ENCODE measurements at regions of chr10 and their contacts with region 1.

Region 1: DNA sequence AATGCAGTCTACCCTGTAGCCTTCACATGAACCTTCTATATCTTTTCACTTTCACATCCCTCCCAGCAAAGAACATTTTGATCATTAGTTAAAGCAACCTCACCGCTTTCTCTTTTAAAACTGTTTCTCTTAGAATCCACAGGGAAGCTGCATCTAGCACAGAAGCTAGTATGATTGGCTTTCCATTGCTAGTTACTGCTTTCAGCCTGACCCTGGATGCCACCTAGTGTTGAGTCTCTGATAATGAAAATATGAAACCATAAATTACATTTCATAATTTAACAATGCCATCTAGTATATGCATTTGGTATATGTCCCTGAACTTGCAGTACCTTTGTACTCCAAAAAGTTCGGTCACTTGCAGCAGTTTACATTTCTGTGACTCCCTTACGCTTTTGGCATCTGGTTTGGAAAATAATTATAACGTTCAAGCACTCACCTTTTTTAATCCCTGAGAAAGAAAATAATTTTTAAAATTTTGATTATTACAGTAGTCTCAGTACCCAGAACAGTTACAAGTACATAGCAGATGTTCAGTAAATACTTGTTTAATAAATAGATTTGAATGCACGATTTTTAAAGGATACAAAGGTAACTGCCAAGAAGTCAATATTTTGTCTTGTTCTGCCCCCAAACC is 22.7 kb downstream of the CISD1 start:
- DNase-seq: peak in 7 of 9 donors; percentile 23 to 59 (median 44)
- ATAC-seq: peak; percentile 86
- H3K4me3 ChIP-seq: no peak overlapping the region
- H3K4me3 Mint-ChIP-seq: no peak overlapping the region
- H3K27ac ChIP-seq: no peak overlapping the region
- H3K27ac Mint-ChIP-seq: peak overlapping the region in 2 of 9 donors; percentile 60 to 76
- H3K4me1 ChIP-seq: no peaks in the 10 kb centered on the region
- H3K4me1 Mint-ChIP-seq: peaks cover 0 to 5% (median 3%) of the 10 kb centered on the region in 7 donors
- H3K27me3 ChIP-seq: no peaks in the 10 kb centered on the region
- H3K27me3 Mint-ChIP-seq: no peaks in the 10 kb centered on the region

Region 2: DNA sequence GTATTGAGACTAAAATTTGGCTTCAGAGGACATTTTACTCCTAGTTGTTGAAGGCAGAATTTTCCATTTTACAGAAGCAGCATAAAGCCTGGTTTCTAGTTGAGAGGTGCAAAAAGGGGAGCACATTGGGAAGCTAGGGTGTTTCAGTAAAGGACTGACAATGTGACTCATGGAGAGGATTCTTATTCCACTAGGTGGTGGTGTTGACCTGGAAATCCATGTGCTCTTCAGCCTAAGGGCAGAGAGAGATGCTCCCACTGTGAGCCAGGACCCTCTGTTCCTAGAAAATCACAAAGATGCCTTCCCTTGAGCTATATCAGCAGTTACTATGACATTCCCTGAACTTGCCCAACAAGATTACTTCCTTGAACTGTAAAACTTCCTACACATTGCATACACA is 711.7 kb before region 1 on chr10:
- CTCF ChIA-PET with region 1: no interaction called
- POLR2A ChIA-PET with region 1: no interaction called
- intact Hi-C with region 1: loop called in 1 of 2 experiments (anchors 5 kb)
- DNase-seq: no peak
- ATAC-seq: no peak
- H3K4me3 ChIP-seq: no peak overlapping the region
- H3K4me3 Mint-ChIP-seq: no peak overlapping the region
- H3K27ac ChIP-seq: no peak overlapping the region
- H3K27ac Mint-ChIP-seq: no peak overlapping the region
- H3K4me1 ChIP-seq: no peaks in the 10 kb centered on the region
- H3K4me1 Mint-ChIP-seq: no peaks in the 10 kb centered on the region
- H3K27me3 ChIP-seq: no peaks in the 10 kb centered on the region
- H3K27me3 Mint-ChIP-seq: no peaks in the 10 kb centered on the region

Region 3: DNA sequence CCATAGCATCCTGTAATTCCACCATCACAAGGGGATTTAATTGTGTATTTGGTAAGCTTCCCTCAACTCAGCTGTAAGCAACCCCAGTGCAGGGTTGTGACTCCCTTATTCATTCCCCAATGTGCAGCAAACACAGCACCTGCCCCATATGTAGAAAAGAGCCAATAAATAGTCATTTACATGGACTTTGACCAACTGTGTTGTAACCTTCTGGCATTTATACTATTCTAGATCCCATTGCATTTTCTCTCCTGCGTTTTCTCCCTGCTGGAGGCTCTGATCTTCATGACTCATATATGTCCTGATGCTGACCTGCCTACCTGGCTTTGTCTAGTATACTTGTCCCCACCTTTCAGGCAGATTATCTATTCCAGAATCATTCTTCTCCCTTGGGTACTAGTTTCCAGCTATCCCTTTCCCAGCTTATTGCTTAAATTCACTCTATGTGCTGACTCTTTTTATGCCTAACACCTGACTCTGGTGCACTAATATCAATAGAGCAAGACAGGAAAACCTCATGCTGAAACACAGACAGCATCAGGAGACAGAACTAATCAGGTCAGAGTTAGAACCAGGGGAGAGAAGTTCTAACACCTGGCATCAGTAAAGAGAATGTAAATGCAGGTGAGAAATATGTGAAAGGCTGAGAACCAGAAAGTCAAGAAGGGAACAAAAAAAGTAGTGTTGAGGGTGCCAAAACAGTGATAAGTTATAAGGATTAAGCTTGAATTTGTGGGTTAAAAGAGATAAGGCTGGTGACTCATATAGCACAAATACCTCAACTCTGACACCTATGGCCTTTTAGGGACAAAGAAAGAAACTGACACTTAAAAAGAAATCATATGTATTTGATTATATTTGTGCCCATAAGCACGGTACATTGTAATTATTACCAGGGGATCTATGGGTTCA is 426.6 kb before region 1 on chr10:
- CTCF ChIA-PET with region 1: no interaction called
- POLR2A ChIA-PET with region 1: no interaction called
- intact Hi-C with region 1: no loop called
- DNase-seq: no peak
- ATAC-seq: no peak
- H3K4me3 ChIP-seq: no peak overlapping the region
- H3K4me3 Mint-ChIP-seq: no peak overlapping the region
- H3K27ac ChIP-seq: no peak overlapping the region
- H3K27ac Mint-ChIP-seq: no peak overlapping the region
- H3K4me1 ChIP-seq: no peaks in the 10 kb centered on the region
- H3K4me1 Mint-ChIP-seq: no peaks in the 10 kb centered on the region
- H3K27me3 ChIP-seq: no peaks in the 10 kb centered on the region
- H3K27me3 Mint-ChIP-seq: no peaks in the 10 kb centered on the region

Region 4: DNA sequence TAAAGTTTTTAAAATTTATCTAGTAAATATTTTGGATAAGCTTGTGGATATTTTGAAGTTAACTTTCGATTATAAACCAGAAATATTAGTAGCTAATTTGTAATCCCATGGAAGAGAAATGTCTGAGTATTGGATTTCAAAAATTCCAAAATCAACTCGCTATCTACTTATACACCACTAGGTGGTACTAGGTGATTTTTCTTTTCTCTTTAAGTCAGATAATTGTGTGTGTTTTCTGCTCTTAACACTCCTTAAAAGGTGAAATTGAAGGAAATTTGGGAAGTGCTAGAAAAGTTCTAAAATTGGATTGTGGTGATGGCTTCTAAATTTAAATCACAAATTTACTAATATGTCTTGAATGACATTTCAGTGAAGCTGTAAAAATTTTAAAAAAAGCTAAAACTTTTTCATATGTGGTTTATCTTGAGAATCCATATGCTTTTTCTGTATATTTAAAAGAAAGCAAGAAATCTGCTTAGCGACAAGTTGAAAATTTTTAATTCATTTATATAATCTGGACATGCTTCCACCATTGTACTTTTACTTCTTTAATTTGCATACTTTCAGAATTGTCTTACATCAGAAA is 114.2 kb before region 1 on chr10:
- CTCF ChIA-PET with region 1: interaction called, 118 read pairs
- POLR2A ChIA-PET with region 1: no interaction called
- intact Hi-C with region 1: loop called (anchors 1 kb)
- DNase-seq: peak in 3 of 9 donors; percentile 12 to 29 (median 25)
- ATAC-seq: no peak
- H3K4me3 ChIP-seq: no peak overlapping the region
- H3K4me3 Mint-ChIP-seq: no peak overlapping the region
- H3K27ac ChIP-seq: no peak overlapping the region
- H3K27ac Mint-ChIP-seq: no peak overlapping the region
- H3K4me1 ChIP-seq: no peaks in the 10 kb centered on the region
- H3K4me1 Mint-ChIP-seq: no peaks in the 10 kb centered on the region
- H3K27me3 ChIP-seq: no peaks in the 10 kb centered on the region
- H3K27me3 Mint-ChIP-seq: peaks cover 0 to 4% (median 0%) of the 10 kb centered on the region in 5 donors

Region 5: DNA sequence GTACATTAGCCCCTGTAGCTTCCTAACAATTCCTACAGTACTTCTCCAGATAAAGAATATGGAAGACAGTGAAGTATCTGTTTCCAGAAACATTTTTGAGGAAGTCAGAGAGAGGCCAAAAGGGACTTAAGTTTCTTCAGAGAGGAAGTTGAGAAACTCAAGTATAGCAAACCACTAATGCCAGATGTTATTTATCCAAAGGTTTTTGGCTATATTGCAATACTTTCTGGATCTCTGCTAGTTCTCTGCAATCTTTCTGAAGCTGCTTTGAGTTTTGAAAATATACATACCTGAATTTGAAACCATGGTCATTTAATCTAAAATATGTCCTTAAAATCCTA is 285.8 kb after region 1 on chr10:
- CTCF ChIA-PET with region 1: no interaction called
- POLR2A ChIA-PET with region 1: no interaction called
- intact Hi-C with region 1: no loop called
- DNase-seq: no peak
- ATAC-seq: no peak
- H3K4me3 ChIP-seq: no peak overlapping the region
- H3K4me3 Mint-ChIP-seq: no peak overlapping the region
- H3K27ac ChIP-seq: no peak overlapping the region
- H3K27ac Mint-ChIP-seq: no peak overlapping the region
- H3K4me1 ChIP-seq: no peaks in the 10 kb centered on the region
- H3K4me1 Mint-ChIP-seq: no peaks in the 10 kb centered on the region
- H3K27me3 ChIP-seq: no peaks in the 10 kb centered on the region
- H3K27me3 Mint-ChIP-seq: peaks cover 0 to 10% (median 0%) of the 10 kb centered on the region in 5 donors

Region 6: DNA sequence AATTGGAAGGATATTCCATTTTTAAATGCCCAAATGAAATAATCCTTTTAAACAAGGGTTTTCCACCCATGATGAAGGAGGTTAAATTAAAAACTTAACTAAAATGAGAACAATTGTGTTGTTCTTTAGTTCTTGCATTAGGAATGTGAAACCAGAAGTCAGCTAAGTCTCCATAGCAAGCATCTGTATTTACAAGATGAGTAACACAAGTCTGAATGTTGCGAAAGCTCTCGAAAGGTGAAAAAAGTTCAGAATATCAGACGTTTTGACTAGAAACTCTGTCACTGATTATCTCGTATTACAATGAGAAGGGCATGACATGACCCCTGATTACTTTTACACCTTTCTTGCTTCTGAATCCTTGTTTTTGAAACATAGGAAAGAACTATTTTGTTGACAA is 370.7 kb after region 1 on chr10:
- CTCF ChIA-PET with region 1: no interaction called
- POLR2A ChIA-PET with region 1: no interaction called
- intact Hi-C with region 1: no loop called
- DNase-seq: no peak
- ATAC-seq: no peak
- H3K4me3 ChIP-seq: no peak overlapping the region
- H3K4me3 Mint-ChIP-seq: no peak overlapping the region
- H3K27ac ChIP-seq: no peak overlapping the region
- H3K27ac Mint-ChIP-seq: no peak overlapping the region
- H3K4me1 ChIP-seq: peaks cover 0 to 6% of the 10 kb centered on the region in 2 donors
- H3K4me1 Mint-ChIP-seq: peaks cover 0 to 12% (median 6%) of the 10 kb centered on the region in 7 donors
- H3K27me3 ChIP-seq: no peaks in the 10 kb centered on the region
- H3K27me3 Mint-ChIP-seq: peaks cover 0 to 9% (median 0%) of the 10 kb centered on the region in 5 donors